ENCODE measurements at regions of chr11 and their contacts with region 1.

Region 1: DNA sequence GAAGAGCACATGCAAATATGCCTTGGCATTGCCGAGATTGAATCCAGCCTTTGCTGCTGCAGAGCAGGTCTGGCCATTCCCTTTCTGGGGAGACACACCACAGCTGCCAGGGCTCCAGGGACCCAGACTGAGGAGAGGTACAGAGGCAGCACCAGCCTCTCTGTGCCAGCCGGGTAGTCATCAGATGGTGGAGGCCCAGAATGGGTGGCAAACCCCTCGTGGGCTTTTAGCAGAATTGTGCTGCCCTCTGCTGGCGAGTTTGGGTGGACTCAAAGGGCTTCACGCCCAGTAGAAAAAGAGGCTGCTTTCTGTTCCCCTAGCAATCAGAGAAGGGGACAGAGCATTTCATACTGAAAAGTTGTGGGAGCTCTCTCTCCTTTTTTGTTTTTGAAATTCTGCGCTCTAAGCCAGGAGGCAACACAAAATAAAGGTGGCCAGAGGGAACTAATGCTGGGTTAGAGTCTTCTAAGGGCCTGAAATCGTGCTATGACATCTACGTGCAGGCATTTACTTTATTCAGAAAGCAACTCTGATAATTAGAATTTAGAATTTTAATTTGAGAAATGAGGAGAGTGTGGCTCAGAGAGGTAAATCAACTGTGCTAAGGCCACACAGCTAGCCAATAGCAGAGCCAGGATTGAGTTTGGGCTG is 158.8 kb upstream of the NAV2 start:
- DNase-seq: peak; percentile 52 to 79 (median 74)
- H3K4me3 ChIP-seq: no peak overlapping the region
- H3K27ac ChIP-seq: no peak overlapping the region
- H3K4me1 ChIP-seq: no peaks in the 10 kb centered on the region
- H3K27me3 ChIP-seq: no peaks in the 10 kb centered on the region
- CTCF ChIP-seq: peak; percentile 51 to 61 (median 53)
- EP300 ChIP-seq: no peak
- POLR2A ChIP-seq: no peak

Region 2: DNA sequence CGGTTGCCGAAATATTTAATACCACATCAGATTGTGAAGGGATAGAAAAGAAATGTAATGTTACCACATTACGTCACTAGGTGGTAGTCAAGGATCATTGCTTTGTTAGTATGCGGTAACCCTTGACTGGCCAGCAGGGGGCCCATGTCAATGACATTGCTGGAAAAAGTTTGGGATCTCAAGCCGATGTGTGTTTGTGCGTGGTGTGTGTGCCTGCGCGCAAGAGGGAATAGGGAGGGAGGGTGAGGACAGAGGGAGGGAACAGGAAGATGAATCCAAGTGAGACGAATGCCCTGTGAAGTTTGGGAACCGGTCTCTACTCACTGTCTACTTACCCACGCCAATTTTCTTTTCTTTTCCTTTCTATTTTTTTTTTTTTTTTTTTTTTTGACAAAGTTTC is 482.6 kb before region 1 on chr11:
- intact Hi-C with region 1: loop called in 2 of 4 experiments (anchors 5 to 10 kb)
- DNase-seq: peak; percentile 35 to 65 (median 59)
- H3K4me3 ChIP-seq: no peak overlapping the region
- H3K27ac ChIP-seq: no peak overlapping the region
- H3K4me1 ChIP-seq: peaks cover 2% of the 10 kb centered on the region
- H3K27me3 ChIP-seq: no peaks in the 10 kb centered on the region
- CTCF ChIP-seq: peak; percentile 38 to 67 (median 61)
- EP300 ChIP-seq: no peak
- POLR2A ChIP-seq: no peak

Region 3: DNA sequence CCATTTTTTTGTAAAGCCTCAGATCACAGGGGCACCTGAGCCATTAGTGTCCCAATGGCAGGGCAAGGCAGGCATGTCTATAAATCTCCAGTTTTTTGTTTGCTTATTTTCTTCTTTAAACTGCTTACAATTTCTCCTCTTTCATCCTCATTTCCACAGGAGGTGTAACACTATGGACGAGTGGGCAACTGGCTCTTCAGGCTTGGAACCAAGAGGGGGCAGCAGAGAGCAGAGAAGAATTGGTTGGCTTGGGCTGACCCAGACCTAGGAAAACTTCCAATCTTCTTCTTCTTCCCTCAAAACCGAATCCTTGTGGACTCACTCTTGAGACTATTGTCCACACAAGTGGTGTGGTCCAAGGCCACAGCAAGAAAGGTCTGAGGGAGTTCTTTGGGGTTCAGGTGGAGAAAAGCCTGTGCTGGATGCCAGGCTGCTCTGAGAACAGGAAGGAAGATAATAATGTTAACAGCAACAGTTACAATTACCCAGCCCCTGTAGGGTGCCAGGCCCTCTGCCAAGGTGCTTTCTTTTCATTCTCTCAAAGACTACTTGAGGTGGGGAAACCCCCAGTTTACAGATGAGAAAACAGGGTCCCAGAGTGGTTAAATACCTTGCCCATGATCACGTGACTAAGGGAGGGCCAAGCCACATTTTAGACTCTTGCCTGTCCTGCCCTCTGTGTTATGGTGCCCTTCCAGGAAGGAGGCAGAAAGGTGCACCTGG is 242.3 kb before region 1 on chr11:
- intact Hi-C with region 1: loop called in 1 of 4 experiments (anchors 2 kb)
- DNase-seq: peak in 4 of 5 donors; percentile 32 to 51 (median 45)
- H3K4me3 ChIP-seq: no peak overlapping the region
- H3K27ac ChIP-seq: no peak overlapping the region
- H3K4me1 ChIP-seq: no peaks in the 10 kb centered on the region
- H3K27me3 ChIP-seq: no peaks in the 10 kb centered on the region
- CTCF ChIP-seq: no peak
- EP300 ChIP-seq: no peak
- POLR2A ChIP-seq: no peak

Region 4: GRCh38 chr11:19460718-19461405 is 92.9 kb before region 1 on chr11:
- intact Hi-C with region 1: no loop called
- DNase-seq: peak in 2 of 5 donors; percentile 42 to 48
- H3K4me3 ChIP-seq: no peak overlapping the region
- H3K27ac ChIP-seq: no peak overlapping the region
- H3K4me1 ChIP-seq: no peaks in the 10 kb centered on the region
- H3K27me3 ChIP-seq: no peaks in the 10 kb centered on the region
- CTCF ChIP-seq: no peak
- EP300 ChIP-seq: no peak
- POLR2A ChIP-seq: no peak